ENCODE measurements at regions of chr12 and their contacts with region 1.

Region 1: DNA sequence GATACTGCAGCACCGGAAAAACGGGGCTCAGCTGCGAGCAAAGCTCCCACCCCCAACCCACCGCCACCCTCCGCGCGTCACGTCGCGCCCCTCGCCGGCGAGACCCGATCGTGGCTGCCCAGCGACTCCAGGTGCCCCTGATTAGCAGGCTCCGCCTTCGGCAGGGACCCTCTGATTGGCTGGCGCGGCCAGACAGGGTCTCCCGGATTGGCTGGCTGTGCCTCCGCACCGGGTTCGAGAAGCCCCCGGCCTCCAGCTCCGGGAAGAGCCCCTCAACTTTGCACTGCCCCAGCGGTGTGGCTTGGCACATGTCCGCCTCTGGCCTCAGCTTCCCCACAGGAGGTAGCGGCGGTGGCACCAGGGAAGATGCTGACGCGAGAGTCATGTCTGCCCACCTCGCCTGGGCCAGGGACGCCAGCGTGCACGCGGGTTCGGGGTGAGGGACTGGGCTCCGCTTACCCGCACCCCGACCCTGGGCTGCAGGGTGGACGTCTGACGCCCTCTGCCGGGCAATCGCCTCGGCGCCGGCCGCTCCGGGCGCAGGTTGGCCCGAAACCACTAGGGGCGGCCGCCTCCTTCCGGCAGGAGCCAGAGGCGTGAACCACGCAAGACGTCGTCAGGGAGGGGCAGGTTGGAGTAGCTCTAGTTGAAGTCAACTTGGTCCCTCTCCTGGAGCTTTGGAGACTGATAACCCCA is 498 bp upstream of the RHOF start:
- DNase-seq: peak; percentile 90 to 98 (median 95)
- ATAC-seq: peak; percentile 48
- H3K4me3 ChIP-seq: peak overlapping the region; percentile 94
- H3K4me3 Mint-ChIP-seq: peak overlapping the region; percentile 85
- H3K27ac ChIP-seq: peak overlapping the region; percentile 94 to 99
- H3K27ac Mint-ChIP-seq: peak overlapping the region; percentile 97
- H3K4me1 ChIP-seq: peaks cover 94% of the 10 kb centered on the region
- H3K4me1 Mint-ChIP-seq: peaks cover 72% of the 10 kb centered on the region
- H3K27me3 ChIP-seq: no peaks in the 10 kb centered on the region
- H3K27me3 Mint-ChIP-seq: no peaks in the 10 kb centered on the region
- CTCF ChIP-seq: peak; percentile 97

Region 2: GRCh38 chr12:121668750-121669520 is 125.1 kb before region 1 on chr12:
- CTCF ChIA-PET with region 1: interaction called, 15 read pairs
- POLR2A ChIA-PET with region 1: interaction called, 8 read pairs
- intact Hi-C with region 1: no loop called
- DNase-seq: peak; percentile 38 to 81 (median 59)
- ATAC-seq: no peak
- H3K4me3 ChIP-seq: no peak overlapping the region
- H3K4me3 Mint-ChIP-seq: peak overlapping the region; percentile 65
- H3K27ac ChIP-seq: no peak overlapping the region
- H3K27ac Mint-ChIP-seq: peak overlapping the region; percentile 83
- H3K4me1 ChIP-seq: peaks cover 83% of the 10 kb centered on the region
- H3K4me1 Mint-ChIP-seq: peaks cover 66% of the 10 kb centered on the region
- H3K27me3 ChIP-seq: no peaks in the 10 kb centered on the region
- H3K27me3 Mint-ChIP-seq: no peaks in the 10 kb centered on the region
- CTCF ChIP-seq: peak; percentile 77

Region 3: DNA sequence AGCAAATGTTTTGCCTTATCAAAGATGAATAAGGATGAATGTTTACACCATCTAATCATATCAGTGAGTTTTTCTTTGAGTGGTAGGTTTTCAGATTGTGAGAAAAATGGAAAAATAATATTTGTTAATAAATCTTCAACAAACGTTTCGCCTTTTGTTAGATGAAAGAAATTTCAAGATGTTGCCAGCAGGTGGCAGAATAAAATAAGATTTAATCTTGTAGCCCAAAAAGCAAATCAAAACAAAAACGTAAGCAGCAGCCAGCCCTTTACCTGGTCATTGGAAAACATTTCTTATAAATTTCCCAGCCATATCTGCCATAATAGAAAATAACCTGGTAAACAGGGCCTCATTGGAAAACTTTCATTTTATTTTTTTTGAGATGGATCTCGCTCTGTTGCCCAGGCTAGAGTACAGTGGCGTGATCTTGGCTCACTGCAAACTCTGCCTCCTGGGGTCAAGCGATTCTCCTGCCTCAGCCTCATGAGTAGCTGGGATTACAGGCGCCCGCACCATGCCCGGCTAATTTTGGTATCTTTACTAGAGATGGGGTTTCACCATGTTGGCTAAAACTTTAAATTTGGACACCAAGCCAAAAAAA is 96.8 kb before region 1 on chr12:
- CTCF ChIA-PET with region 1: interaction called, 29 read pairs
- POLR2A ChIA-PET with region 1: interaction called, 3 read pairs
- intact Hi-C with region 1: loop called (anchors 1 kb)
- DNase-seq: peak in 4 of 14 experiments; percentile 55 to 79 (median 78)
- ATAC-seq: peak; percentile 32
- H3K4me3 ChIP-seq: no peak overlapping the region
- H3K4me3 Mint-ChIP-seq: no peak overlapping the region
- H3K27ac ChIP-seq: no peak overlapping the region
- H3K27ac Mint-ChIP-seq: no peak overlapping the region
- H3K4me1 ChIP-seq: peaks cover 2% of the 10 kb centered on the region
- H3K4me1 Mint-ChIP-seq: peaks cover 4% of the 10 kb centered on the region
- H3K27me3 ChIP-seq: no peaks in the 10 kb centered on the region
- H3K27me3 Mint-ChIP-seq: no peaks in the 10 kb centered on the region
- CTCF ChIP-seq: peak; percentile 81

Region 4: DNA sequence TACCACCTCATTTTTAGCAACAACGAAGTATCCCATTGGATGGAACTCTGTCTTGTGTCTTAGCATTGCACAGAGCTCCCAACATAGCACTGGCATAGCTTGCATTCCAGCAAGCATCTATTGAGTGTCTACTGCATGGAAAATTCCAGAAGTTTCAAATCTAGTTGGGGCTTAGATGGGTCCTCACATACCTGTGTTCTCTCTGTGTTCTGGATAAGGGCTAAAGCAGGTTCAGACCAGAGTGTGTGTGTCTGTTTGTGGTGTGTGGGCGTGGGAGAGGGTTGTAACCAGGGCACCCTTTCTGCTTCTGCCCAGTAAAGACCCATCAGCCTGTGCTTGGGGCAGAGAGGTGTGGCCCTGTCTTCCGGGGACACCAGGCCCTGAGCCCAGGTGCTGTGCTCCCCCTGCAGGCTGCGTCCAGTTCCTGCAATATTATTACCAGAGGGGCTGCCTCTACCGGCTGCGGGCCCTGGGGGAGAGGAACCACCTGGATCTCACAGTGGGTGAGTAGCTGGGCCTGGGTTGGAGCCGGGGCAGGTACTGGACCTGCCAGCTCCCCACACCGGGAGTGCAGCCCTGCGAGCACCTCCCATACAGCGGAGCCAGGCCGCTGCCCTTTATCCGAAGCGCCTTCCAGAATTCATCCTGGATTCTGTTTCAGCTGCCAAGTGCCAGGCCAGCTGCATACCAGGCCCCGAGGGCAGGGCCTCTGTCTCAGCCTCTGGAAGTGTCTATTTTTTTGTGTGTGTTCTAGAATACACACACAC is 20.8 kb before region 1 on chr12:
- CTCF ChIA-PET with region 1: interaction called, 104 read pairs
- POLR2A ChIA-PET with region 1: interaction called, 1,869 read pairs
- intact Hi-C with region 1: loop called (anchors 1 kb)
- DNase-seq: peak; percentile 67 to 89 (median 76)
- ATAC-seq: peak; percentile 84
- H3K4me3 ChIP-seq: no peak overlapping the region
- H3K4me3 Mint-ChIP-seq: no peak overlapping the region
- H3K27ac ChIP-seq: no peak overlapping the region
- H3K27ac Mint-ChIP-seq: no peak overlapping the region
- H3K4me1 ChIP-seq: peaks cover 26% of the 10 kb centered on the region
- H3K4me1 Mint-ChIP-seq: peaks cover 13% of the 10 kb centered on the region
- H3K27me3 ChIP-seq: no peaks in the 10 kb centered on the region
- H3K27me3 Mint-ChIP-seq: no peaks in the 10 kb centered on the region
- CTCF ChIP-seq: peak; percentile 91

Region 5: GRCh38 chr12:121823101-121823726 is 29.2 kb after region 1 on chr12:
- CTCF ChIA-PET with region 1: interaction called, 38 read pairs
- POLR2A ChIA-PET with region 1: interaction called, 1,869 read pairs
- intact Hi-C with region 1: loop called in 1 of 2 experiments (anchors 5 kb)
- DNase-seq: no peak
- ATAC-seq: no peak
- H3K4me3 ChIP-seq: no peak overlapping the region
- H3K4me3 Mint-ChIP-seq: no peak overlapping the region
- H3K27ac ChIP-seq: no peak overlapping the region
- H3K27ac Mint-ChIP-seq: peak overlapping the region; percentile 30
- H3K4me1 ChIP-seq: no peaks in the 10 kb centered on the region
- H3K4me1 Mint-ChIP-seq: no peaks in the 10 kb centered on the region
- H3K27me3 ChIP-seq: no peaks in the 10 kb centered on the region
- H3K27me3 Mint-ChIP-seq: no peaks in the 10 kb centered on the region
- CTCF ChIP-seq: no peak

Region 6: GRCh38 chr12:121839106-121839992 is 45.4 kb after region 1 on chr12:
- CTCF ChIA-PET with region 1: interaction called, 44 read pairs
- POLR2A ChIA-PET with region 1: interaction called, 22 read pairs
- intact Hi-C with region 1: loop called (anchors 2 kb)
- DNase-seq: peak; percentile 99 to 100 (median 100)
- ATAC-seq: peak; percentile 97
- H3K4me3 ChIP-seq: peak overlapping the region; percentile 85
- H3K4me3 Mint-ChIP-seq: peak overlapping the region; percentile 94
- H3K27ac ChIP-seq: peak overlapping the region; percentile 21 to 44
- H3K27ac Mint-ChIP-seq: peak overlapping the region; percentile 77
- H3K4me1 ChIP-seq: peaks cover 18% of the 10 kb centered on the region
- H3K4me1 Mint-ChIP-seq: peaks cover 14% of the 10 kb centered on the region
- H3K27me3 ChIP-seq: no peaks in the 10 kb centered on the region
- H3K27me3 Mint-ChIP-seq: no peaks in the 10 kb centered on the region
- CTCF ChIP-seq: peak; percentile 54

Measured in CD4-positive, alpha-beta T cell (primary cell).